ENCODE measurements at regions of chr21 and their contacts with region 1.

Region 1: GRCh38 chr21:25717491-25718147 is 17.1 kb downstream of the ATP5PF start:
- DNase-seq: no peak
- ATAC-seq: no peak
- H3K4me3 ChIP-seq: no peak overlapping the region
- H3K27ac ChIP-seq: no peak overlapping the region
- H3K4me1 ChIP-seq: no peaks in the 10 kb centered on the region
- H3K27me3 ChIP-seq: no peaks in the 10 kb centered on the region

Region 2: DNA sequence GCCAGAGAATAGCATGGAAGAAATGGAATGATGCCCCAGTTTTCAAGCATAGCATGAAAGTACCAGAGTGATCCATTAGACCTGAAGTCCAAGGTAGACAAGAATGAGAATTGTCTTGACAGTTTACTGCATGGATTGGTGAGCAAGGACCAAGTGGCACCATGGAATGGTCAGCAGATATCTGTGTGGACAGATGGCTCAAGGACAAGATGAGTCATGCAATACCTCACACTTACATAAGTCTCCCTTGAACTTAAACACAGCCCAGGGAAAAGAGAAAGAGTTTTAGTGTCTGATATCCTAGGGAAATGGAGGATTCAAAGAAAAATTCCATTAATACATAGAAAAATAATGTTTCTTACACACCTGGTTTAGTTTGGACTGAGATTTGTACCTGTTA is 305.5 kb before region 1 on chr21:
- intact Hi-C with region 1: loop called in 1 of 2 experiments (anchors 10 kb)
- DNase-seq: no peak
- ATAC-seq: no peak
- H3K4me3 ChIP-seq: no peak overlapping the region
- H3K27ac ChIP-seq: no peak overlapping the region
- H3K4me1 ChIP-seq: no peaks in the 10 kb centered on the region
- H3K27me3 ChIP-seq: no peaks in the 10 kb centered on the region

Measured in aorta (tissue), 5 donors.